Activated CD4-positive, alpha-beta memory T cell treated with anti-CD3 and anti-CD28 coated beads for 36 hours (primary cell): ENCODE measurements at regions of chr13 and their contacts with region 1.

Region 1: DNA sequence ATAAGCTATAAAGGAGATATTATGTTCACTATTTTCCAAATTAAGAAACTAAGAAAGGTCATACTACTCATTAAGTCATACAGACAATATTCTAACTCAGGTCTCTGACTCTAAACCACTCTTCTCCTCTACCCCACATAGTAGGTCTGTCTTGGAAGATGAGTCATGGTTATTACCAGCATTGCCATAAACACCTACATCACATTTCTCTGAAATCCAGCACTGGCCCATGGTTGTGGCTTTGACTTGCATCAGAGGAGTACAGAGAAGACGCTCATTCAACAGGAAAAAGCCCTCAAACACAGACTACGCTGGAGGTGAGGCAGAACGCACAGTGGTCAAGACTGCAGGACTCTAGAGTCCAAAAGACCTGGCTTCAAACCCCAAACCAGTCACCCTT is 476.8 kb downstream of the COG6 start:
- DNase-seq: peak; percentile 80
- H3K4me3 Mint-ChIP-seq: no peak overlapping the region
- H3K27ac Mint-ChIP-seq: peak overlapping the region; percentile 77
- H3K4me1 Mint-ChIP-seq: peaks cover 42% of the 10 kb centered on the region
- H3K27me3 Mint-ChIP-seq: no peaks in the 10 kb centered on the region

Region 2: DNA sequence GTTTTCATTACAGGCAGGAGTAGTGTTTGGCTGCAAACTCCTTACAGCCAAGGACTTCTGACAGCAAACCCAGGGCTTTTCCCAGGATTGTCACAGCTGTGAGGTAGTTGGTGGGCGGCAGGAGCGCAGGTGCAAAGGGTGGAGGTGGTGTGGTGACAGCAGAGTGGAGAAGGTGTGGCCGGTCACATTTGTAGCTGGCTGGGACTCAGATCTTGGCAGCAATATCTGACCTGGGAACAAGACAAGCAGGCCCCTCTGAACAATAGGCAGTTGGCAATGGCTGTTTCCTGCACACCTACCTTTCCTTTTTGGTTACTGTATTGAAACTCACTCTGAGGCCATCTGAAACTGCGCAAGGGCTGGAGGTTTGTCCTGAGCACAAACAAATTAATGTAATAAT is 149.5 kb before region 1 on chr13:
- CTCF ChIA-PET with region 1: no interaction called
- POLR2A ChIA-PET with region 1: no interaction called
- intact Hi-C with region 1: no loop called
- DNase-seq: no peak
- H3K4me3 Mint-ChIP-seq: no peak overlapping the region
- H3K27ac Mint-ChIP-seq: no peak overlapping the region
- H3K4me1 Mint-ChIP-seq: no peaks in the 10 kb centered on the region
- H3K27me3 Mint-ChIP-seq: no peaks in the 10 kb centered on the region

Region 3: DNA sequence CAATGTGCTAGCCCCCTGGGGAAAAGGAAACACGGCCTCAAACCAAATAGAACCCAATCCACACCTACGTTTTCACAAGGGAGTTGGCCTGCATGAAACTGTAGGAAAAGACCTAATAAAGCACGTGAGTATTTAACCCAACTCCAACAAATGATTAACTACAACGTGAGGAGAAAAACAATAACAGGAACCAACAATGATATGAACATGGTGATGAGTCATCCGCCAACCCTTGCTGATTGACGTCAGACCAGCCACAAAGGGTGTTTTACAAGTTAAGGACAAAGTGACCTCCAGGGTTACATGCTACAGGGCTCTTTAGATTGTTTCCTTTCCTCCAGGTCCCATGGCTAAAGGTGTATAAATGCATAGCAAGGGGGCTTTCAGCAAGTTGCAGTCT is 16.2 kb before region 1 on chr13:
- CTCF ChIA-PET with region 1: no interaction called
- POLR2A ChIA-PET with region 1: interaction called, 3 read pairs
- intact Hi-C with region 1: loop called (anchors 1 kb)
- DNase-seq: peak; percentile 77
- H3K4me3 Mint-ChIP-seq: no peak overlapping the region
- H3K27ac Mint-ChIP-seq: peak overlapping the region; percentile 78
- H3K4me1 Mint-ChIP-seq: peaks cover 30% of the 10 kb centered on the region
- H3K27me3 Mint-ChIP-seq: no peaks in the 10 kb centered on the region